ENCODE measurements at regions of chr3 and their contacts with region 1.

Region 1: DNA sequence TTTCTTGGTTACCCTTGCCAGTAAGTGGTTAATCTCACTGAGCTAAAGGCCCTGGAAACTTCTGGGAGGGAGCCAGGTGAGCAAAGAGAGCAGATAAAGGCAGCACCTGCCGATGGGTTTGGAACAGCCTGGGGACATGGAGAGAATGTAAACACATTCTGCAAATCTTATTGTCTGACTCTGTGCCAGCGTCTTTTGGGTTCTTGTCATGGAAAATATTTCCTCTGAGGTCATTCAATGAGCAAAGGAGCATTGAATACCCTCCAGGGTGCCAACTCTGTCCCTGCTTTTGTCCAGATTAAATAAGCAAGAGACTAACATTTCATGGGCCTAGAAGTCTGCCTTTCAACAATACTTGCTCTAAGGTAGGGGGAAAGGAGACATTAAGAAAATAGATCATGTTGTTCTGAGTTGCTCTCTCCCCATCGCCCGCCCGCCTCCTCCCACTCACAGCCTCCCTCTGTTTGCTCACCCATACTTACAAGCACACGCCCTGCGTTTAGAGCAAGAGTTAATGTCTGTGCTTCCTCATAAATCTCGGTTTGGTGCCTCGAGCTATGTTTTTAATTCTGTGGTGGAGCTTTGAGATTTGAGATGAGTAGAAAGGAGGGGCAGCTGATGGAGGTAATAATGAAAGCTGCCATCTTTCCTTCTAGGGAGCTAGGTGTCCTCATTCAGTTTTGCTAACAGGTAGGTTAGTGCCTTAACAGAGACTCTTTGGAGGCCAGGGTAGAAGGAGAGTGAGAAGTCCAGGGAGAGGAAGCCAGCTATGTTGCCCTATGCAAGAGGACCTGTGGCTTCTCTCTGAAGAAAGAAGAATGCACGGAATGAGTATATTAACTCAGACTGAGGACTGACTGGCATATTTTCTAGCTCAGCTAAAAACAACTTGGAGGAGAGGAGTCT is 132.9 kb downstream of the TPRG1 start:
- DNase-seq: peak; percentile 72 to 77
- H3K4me3 ChIP-seq: no peak overlapping the region
- H3K4me3 Mint-ChIP-seq: peak overlapping the region; percentile 56
- H3K27ac Mint-ChIP-seq: peak overlapping the region; percentile 91
- H3K4me1 ChIP-seq: peaks cover 24% of the 10 kb centered on the region
- H3K4me1 Mint-ChIP-seq: peaks cover 21% of the 10 kb centered on the region
- H3K27me3 ChIP-seq: no peaks in the 10 kb centered on the region
- H3K27me3 Mint-ChIP-seq: no peaks in the 10 kb centered on the region
- CTCF ChIP-seq: no peak

Region 2: GRCh38 chr3:189324538-189325138 is 19.9 kb after region 1 on chr3:
- CTCF ChIA-PET with region 1: no interaction called
- POLR2A ChIA-PET with region 1: no interaction called
- intact Hi-C with region 1: loop called (anchors 2 kb)
- DNase-seq: peak; percentile 69 to 84
- H3K4me3 ChIP-seq: no peak overlapping the region
- H3K4me3 Mint-ChIP-seq: peak overlapping the region; percentile 41
- H3K27ac Mint-ChIP-seq: peak overlapping the region; percentile 79
- H3K4me1 ChIP-seq: peaks cover 32% of the 10 kb centered on the region
- H3K4me1 Mint-ChIP-seq: peaks cover 14% of the 10 kb centered on the region
- H3K27me3 ChIP-seq: no peaks in the 10 kb centered on the region
- H3K27me3 Mint-ChIP-seq: no peaks in the 10 kb centered on the region
- CTCF ChIP-seq: no peak